HepG2 (cell line): ENCODE measurements at regions of chr1 and their contacts with region 1.

Region 1: DNA sequence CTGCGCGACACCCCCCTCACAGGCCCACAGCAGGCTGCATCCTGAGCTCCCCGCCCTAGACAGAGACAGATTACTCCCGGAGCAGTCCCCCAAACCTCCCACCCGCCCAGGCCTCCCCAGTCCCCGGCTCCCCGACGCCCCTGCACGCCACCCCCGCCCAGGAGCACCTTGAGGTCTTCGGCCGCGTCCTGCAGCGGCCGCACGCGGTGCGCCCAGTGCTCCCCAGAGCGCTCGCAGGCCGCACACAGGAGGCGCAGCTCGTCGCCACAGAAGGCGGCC is 709 bp downstream of the TRIM11 start:
- DNase-seq: no peak
- ATAC-seq: peak; percentile 45
- H3K4me3 ChIP-seq: peak overlapping the region; percentile 89 to 97 (median 97)
- H3K27ac ChIP-seq: peak overlapping the region; percentile 77
- H3K4me1 ChIP-seq: peaks cover 55% of the 10 kb centered on the region
- H3K27me3 ChIP-seq: no peaks in the 10 kb centered on the region; a peak in 1 of 5 replicates
- CTCF ChIP-seq: no peak
- EP300 ChIP-seq: no peak
- POLR2A ChIP-seq: no peak
- RAD21 ChIP-seq: no peak

Region 2: DNA sequence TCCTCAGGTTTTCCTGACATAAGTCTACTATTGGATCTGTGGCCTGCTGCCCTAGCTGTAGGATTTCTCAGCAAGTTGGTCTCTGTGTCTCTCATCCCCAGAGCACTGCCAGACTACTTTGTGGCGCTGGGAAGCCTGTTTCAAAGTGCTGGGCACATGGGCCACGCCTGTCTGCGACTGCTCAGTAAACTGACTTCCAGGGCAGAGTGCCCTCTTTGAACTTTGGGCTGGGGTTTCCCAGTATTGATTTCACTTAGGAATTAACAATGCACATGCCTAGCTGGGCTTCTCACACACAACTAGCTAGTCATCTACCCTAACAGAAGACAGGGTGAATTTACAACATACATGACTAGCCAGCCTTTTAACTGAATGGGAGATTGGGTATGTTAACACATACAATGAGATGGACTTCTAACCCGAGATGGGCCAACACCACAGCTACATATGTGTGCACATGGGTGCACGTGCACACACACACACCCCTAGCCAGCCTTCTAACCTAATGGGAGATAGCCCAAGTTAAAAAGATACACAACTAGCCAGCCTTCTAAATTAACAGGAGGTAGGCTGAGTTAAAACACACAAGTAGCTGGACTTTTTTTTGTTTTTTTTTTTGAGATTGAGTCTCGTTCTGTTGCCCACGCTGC is 17.6 kb after region 1 on chr1:
- CTCF ChIA-PET with region 1: no interaction called
- POLR2A ChIA-PET with region 1: interaction called, 13 read pairs
- in situ Hi-C with region 1: no loop called
- intact Hi-C with region 1: no loop called
- DNase-seq: peak; percentile 67
- ATAC-seq: peak; percentile 92
- H3K4me3 ChIP-seq: no peak overlapping the region
- H3K27ac ChIP-seq: no peak overlapping the region
- H3K4me1 ChIP-seq: peaks cover 30% of the 10 kb centered on the region
- H3K27me3 ChIP-seq: 0 out of 5 replicates have a peak, but pooled peaks cover 0 to 3% of the 10 kb centered on the region in 2 experiments
- CTCF ChIP-seq: no peak
- EP300 ChIP-seq: 0 out of 4 replicates have a peak, but pooled peaks of 1 of the 2 experiments have one; percentile 18
- POLR2A ChIP-seq: no peak
- RAD21 ChIP-seq: no peak

Region 3: GRCh38 chr1:228486596-228487335 is 80.8 kb after region 1 on chr1:
- CTCF ChIA-PET with region 1: no interaction called
- POLR2A ChIA-PET with region 1: no interaction called
- in situ Hi-C with region 1: no loop called
- intact Hi-C with region 1: loop called (anchors 5 kb)
- DNase-seq: peak; percentile 72
- ATAC-seq: peak; percentile 87
- H3K4me3 ChIP-seq: peak overlapping the region; percentile 72 to 100 (median 93)
- H3K27ac ChIP-seq: peak overlapping the region; percentile 95
- H3K4me1 ChIP-seq: peaks cover 49% of the 10 kb centered on the region
- H3K27me3 ChIP-seq: no peaks in the 10 kb centered on the region
- CTCF ChIP-seq: no peak
- EP300 ChIP-seq: peak in 1 of 2 experiments; percentile 100; a peak in 1 of 4 replicates
- POLR2A ChIP-seq: peak in 1 of 2 experiments; percentile 54; a peak in 2 of 4 replicates
- RAD21 ChIP-seq: no peak

Region 4: GRCh38 chr1:228765168-228765946 is 359.4 kb after region 1 on chr1:
- CTCF ChIA-PET with region 1: no interaction called
- POLR2A ChIA-PET with region 1: no interaction called
- in situ Hi-C with region 1: no loop called
- intact Hi-C with region 1: no loop called
- DNase-seq: no peak
- ATAC-seq: no peak
- H3K4me3 ChIP-seq: no peak overlapping the region
- H3K27ac ChIP-seq: no peak overlapping the region
- H3K4me1 ChIP-seq: peaks cover 44% of the 10 kb centered on the region
- H3K27me3 ChIP-seq: peaks cover 0 to 11% of the 10 kb centered on the region in 2 experiments; a peak in 4 of 5 replicates
- CTCF ChIP-seq: no peak
- EP300 ChIP-seq: no peak
- POLR2A ChIP-seq: no peak
- RAD21 ChIP-seq: no peak